ENCODE measurements at regions of chr11 and their contacts with region 1.

Region 1: DNA sequence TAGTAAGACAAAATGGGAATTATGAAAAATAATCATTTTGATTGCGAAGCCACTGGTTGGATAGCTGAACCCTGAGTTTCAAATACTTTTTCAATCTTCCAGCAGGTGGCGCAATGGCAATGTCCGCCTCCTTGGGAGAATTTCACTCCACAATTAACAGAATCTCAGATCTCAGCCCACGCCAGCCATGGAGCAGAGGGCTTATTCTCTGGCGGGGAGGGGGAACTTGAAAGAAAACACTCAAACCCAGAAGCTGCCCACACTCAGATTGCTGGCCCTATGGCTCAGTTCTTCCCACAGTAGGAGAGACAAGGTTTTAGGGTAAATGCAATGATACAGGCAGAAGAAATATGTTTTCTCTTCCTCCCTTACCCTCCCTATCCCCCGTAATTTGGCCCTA is 38.7 kb upstream of the RCN1 start:
- DNase-seq: peak; percentile 61
- ATAC-seq: no peak
- H3K4me3 Mint-ChIP-seq: no peak overlapping the region
- H3K27ac Mint-ChIP-seq: no peak overlapping the region
- H3K4me1 Mint-ChIP-seq: no peaks in the 10 kb centered on the region
- H3K27me3 Mint-ChIP-seq: peaks cover 32% of the 10 kb centered on the region

Region 2: GRCh38 chr11:32176223-32176934 is 124.2 kb after region 1 on chr11:
- CTCF ChIA-PET with region 1: interaction called, 72 read pairs
- POLR2A ChIA-PET with region 1: no interaction called
- DNase-seq: peak; percentile 87
- ATAC-seq: peak; percentile 72
- H3K4me3 Mint-ChIP-seq: no peak overlapping the region
- H3K27ac Mint-ChIP-seq: no peak overlapping the region
- H3K4me1 Mint-ChIP-seq: peaks cover 1% of the 10 kb centered on the region
- H3K27me3 Mint-ChIP-seq: peaks cover 17% of the 10 kb centered on the region